Naive thymus-derived CD4-positive, alpha-beta T cell (primary cell): ENCODE measurements at regions of chr16 and their contacts with region 1.

Region 1: GRCh38 chr16:48353565-48354163 is 31.5 kb downstream of the SIAH1 start:
- DNase-seq: peak; percentile 36 to 82 (median 77)
- ATAC-seq: peak; percentile 98
- H3K4me3 ChIP-seq: no peak overlapping the region
- H3K4me3 Mint-ChIP-seq: peak overlapping the region in 1 of 10 donors; percentile 16
- H3K27ac ChIP-seq: no peak overlapping the region
- H3K27ac Mint-ChIP-seq: peak overlapping the region; percentile 14 to 89 (median 74)
- H3K4me1 ChIP-seq: no peaks in the 10 kb centered on the region
- H3K4me1 Mint-ChIP-seq: peaks cover 6 to 20% (median 13%) of the 10 kb centered on the region in 7 donors
- H3K27me3 ChIP-seq: no peaks in the 10 kb centered on the region
- H3K27me3 Mint-ChIP-seq: no peaks in the 10 kb centered on the region

Region 2: GRCh38 chr16:48244080-48244862 is 109.4 kb before region 1 on chr16 and contains the start of gene LONP2:
- CTCF ChIA-PET with region 1: no interaction called
- POLR2A ChIA-PET with region 1: no interaction called
- intact Hi-C with region 1: loop called in 1 of 2 experiments (anchors 2 kb)
- DNase-seq: peak; percentile 79 to 97 (median 93)
- ATAC-seq: peak; percentile 99
- H3K4me3 ChIP-seq: peak within 1 kb of the TSS; percentile 78
- H3K4me3 Mint-ChIP-seq: peak within 1 kb of the TSS; percentile 93 to 100 (median 96)
- H3K27ac ChIP-seq: peak within 1 kb of the TSS; percentile 78
- H3K27ac Mint-ChIP-seq: peak within 1 kb of the TSS; percentile 89 to 98 (median 96)
- H3K4me1 ChIP-seq: peaks cover 25 to 27% of the 10 kb centered on the region in 2 donors
- H3K4me1 Mint-ChIP-seq: peaks cover 29 to 56% (median 45%) of the 10 kb centered on the region in 7 donors
- H3K27me3 ChIP-seq: no peaks in the 10 kb centered on the region
- H3K27me3 Mint-ChIP-seq: no peaks in the 10 kb centered on the region
- total RNA-seq, gene LONP2: 62.3 to 124 (median 83.0) TPM

Region 3: DNA sequence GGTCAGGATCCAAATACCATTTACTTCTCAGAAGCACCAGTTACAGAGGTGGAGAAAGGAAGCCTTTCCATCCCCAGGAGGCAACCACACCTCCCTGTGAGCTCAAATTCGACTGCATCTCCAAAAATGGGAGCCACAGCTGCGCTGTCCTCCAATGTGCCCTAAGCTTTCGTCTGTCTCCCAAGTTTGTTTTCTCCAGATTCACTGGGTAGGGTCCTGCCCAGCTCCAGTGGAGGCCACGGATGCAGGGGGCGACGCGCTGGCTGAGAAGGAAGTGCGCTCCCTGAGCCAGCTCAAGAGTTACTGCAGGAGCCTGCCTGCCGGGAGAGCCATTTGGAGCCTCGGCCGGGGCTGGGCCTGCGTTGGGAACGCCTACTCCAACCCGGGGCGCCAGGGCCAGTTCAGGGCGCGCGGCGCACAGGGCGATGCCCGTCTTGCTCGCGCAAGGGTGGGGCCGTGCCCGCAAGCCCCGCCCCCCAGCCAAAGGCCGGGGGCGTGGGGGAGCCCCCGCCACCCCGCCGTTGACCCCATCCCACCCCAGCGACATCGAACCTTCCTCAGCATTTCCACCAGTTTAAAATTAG is 12.0 kb after region 1 on chr16:
- CTCF ChIA-PET with region 1: interaction called, 17 read pairs
- POLR2A ChIA-PET with region 1: interaction called, 13 read pairs
- intact Hi-C with region 1: loop called (anchors 1 kb)
- DNase-seq: peak; percentile 66 to 86 (median 73)
- ATAC-seq: peak; percentile 95
- H3K4me3 ChIP-seq: peak overlapping the region; percentile 88
- H3K4me3 Mint-ChIP-seq: peak overlapping the region; percentile 83 to 100 (median 94)
- H3K27ac ChIP-seq: peak overlapping the region; percentile 77
- H3K27ac Mint-ChIP-seq: peak overlapping the region; percentile 89 to 100 (median 98)
- H3K4me1 ChIP-seq: peaks cover 14 to 15% of the 10 kb centered on the region in 2 donors
- H3K4me1 Mint-ChIP-seq: peaks cover 24 to 71% (median 54%) of the 10 kb centered on the region in 7 donors
- H3K27me3 ChIP-seq: no peaks in the 10 kb centered on the region
- H3K27me3 Mint-ChIP-seq: no peaks in the 10 kb centered on the region

Region 4: DNA sequence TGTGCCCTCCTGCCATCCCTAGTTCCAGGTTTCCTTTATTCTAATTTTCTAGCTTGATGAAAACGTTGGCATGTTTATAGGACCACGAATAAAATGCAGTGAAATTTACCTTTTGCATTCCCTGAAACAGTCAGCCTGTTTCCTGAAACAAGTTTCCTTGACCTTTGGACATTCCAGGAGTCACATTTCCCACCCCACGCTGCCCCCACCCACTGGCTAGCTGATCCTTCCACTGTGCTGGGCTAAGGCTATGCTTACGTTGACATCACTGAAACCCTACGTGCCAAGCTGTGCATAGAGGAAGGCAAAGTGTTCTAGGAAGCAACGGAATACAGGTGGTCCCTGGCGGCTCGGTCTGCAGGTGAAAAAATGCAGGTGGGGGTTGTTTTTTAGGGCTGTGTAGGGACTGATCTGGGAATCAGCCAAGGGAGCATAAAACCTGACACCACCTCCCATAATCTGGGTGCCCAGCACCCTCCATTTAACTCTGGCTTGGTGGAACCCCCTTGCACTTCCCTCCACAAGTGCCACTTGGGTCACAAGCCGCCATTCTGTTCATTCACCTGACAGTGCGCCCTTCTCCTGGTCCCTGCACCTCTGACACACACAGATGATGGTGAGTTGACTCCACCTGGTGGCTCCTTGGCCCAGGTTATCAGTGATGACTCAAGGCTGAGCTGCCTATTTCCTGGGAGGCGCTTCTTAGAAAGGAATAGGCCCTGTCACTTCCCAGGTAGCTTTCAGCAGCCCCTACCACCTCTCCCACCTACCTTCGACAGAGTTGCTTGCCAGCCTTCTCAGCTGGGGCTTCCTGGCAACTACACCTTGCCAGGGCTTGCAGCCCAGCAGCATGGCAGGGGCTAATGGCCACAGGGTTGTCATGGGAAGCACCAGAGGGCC is 172.6 kb after region 1 on chr16:
- CTCF ChIA-PET with region 1: interaction called, 3 read pairs
- POLR2A ChIA-PET with region 1: no interaction called
- intact Hi-C with region 1: loop called (anchors 1 to 5 kb)
- DNase-seq: no peak
- ATAC-seq: no peak
- H3K4me3 ChIP-seq: no peak overlapping the region
- H3K4me3 Mint-ChIP-seq: no peak overlapping the region
- H3K27ac ChIP-seq: no peak overlapping the region
- H3K27ac Mint-ChIP-seq: no peak overlapping the region
- H3K4me1 ChIP-seq: no peaks in the 10 kb centered on the region
- H3K4me1 Mint-ChIP-seq: peaks cover 0 to 6% (median 0%) of the 10 kb centered on the region in 7 donors
- H3K27me3 ChIP-seq: no peaks in the 10 kb centered on the region
- H3K27me3 Mint-ChIP-seq: no peaks in the 10 kb centered on the region

Region 5: DNA sequence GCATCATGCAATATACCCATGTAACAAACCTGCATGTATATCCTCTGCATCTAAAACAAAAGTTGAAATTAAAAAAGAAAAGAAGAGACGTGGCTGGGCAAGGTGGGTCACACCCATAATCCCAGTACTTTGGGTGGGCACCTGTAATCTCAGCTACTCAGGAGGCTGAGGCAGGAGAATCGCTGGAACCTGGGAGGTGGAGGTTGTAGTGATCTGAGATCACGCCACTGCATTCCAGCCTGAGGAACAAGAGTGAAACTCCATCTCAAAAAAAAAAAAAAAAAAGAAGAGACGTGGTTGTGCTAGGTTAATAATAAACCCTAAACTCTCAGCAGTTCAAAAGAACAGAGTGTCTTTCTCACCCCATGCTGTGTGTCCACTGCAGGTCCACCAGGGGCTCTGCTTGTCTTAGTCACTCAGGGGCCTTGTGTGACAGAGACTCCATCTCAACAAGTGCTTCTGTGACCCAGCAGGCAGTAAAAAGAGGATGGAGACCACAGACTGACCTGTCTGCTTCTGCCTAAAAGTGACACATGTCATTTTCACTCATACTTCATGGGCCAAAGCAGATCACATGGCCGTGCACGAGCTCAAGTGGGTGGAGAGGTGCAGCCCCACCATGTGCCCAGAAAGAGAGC is 278.6 kb after region 1 on chr16:
- CTCF ChIA-PET with region 1: interaction called, 51 read pairs
- POLR2A ChIA-PET with region 1: interaction called, 3 read pairs
- intact Hi-C with region 1: loop called (anchors 1 kb)
- DNase-seq: no peak
- ATAC-seq: no peak
- H3K4me3 ChIP-seq: no peak overlapping the region
- H3K4me3 Mint-ChIP-seq: no peak overlapping the region
- H3K27ac ChIP-seq: no peak overlapping the region
- H3K27ac Mint-ChIP-seq: no peak overlapping the region
- H3K4me1 ChIP-seq: peaks cover 0 to 5% of the 10 kb centered on the region in 2 donors
- H3K4me1 Mint-ChIP-seq: peaks cover 0 to 9% (median 7%) of the 10 kb centered on the region in 7 donors
- H3K27me3 ChIP-seq: no peaks in the 10 kb centered on the region
- H3K27me3 Mint-ChIP-seq: peaks cover 0 to 2% (median 0%) of the 10 kb centered on the region in 5 donors